ENCODE measurements at regions of chr4 and their contacts with region 1.

Region 1: GRCh38 chr4:71130827-71131603 is 137.6 kb downstream of the DCK start:
- DNase-seq: peak; percentile 72
- H3K4me3 ChIP-seq: no peak overlapping the region
- H3K27ac ChIP-seq: peak overlapping the region; percentile 65
- H3K27me3 ChIP-seq: no peaks in the 10 kb centered on the region
- CTCF ChIP-seq: peak; percentile 37

Region 2: GRCh38 chr4:71029504-71029903 is 101.5 kb before region 1 on chr4:
- in situ Hi-C with region 1: no loop called
- DNase-seq: no peak
- H3K4me3 ChIP-seq: no peak overlapping the region
- H3K27ac ChIP-seq: no peak overlapping the region
- H3K27me3 ChIP-seq: no peaks in the 10 kb centered on the region
- CTCF ChIP-seq: no peak

Region 3: DNA sequence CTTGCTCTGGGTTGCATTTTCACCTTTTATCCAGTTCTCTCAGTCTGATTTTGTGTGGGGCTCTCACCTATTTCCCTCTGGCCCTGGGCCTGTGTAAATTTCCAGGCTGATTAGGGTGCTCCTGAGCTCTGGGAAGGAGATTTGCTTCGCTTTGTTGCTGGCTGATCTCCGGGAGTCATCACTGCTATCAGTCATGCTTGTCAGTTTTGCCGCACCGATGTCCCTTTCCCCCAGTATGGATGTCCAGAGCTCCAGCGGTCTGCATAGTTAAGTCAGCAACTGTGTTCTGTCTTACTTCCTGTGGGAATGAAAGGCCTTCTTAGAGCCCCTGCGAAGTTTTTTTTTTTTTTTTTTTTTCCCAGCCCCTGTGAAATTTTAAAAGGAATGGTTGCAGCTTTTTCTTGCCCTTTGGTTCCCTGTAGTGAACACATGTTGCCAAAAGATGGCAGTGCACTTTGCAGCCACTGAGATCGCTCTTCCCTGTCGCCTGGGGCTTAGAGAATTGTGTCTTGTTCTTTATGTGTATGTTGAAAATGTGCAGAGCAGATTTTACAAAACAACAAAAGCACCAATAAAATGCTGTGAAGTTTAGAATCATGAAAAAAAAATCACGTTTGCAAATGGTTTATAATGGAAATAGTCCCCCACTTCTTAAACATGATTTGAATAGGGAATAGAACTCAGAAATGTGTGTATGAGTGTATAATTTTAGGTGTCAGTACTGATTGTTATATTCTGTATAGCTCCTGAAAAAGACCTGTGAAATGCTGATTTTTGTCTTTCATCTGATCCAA is 98.7 kb after region 1 on chr4:
- in situ Hi-C with region 1: loop called (anchors 25 kb)
- DNase-seq: peak; percentile 43
- H3K4me3 ChIP-seq: peak overlapping the region; percentile 21
- H3K27ac ChIP-seq: no peak overlapping the region
- H3K27me3 ChIP-seq: no peaks in the 10 kb centered on the region
- CTCF ChIP-seq: peak; percentile 85

Measured in brain microvascular endothelial cell (primary cell).